Gastrocnemius medialis (tissue), 4 donors: ENCODE measurements at regions of chr10 and their contacts with region 1.

Region 1: DNA sequence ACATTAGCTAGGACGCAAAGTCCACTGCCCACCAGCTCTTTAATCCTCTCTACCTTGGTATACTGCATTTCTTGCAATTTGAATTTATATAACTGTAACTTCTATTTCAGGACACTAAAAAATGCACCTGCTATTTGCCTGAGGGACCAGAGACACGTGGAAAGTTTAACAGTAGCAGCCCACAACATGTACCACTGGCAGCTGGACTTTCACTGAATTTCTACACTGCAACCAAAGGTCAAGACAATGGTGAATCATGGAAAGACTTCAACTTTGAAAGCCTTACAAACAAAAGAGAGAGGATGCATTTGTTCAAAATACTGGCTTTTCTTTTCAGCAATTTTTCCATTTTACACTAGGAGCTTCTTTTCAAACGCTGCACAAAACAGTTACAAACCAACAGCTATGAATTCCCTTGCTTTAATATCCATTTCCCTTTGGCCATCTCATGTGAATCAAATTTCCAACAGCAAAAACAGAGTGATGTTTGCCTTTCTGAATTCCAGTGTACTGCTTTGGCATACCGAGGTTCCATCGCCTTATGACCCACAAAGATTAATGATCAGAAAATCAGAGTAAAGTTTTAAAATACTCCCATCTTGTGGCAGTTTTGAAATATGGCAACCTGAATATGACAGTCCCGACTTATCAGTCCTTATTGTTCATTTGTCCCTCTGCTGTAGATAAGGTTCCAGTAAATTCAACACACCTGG is 29.9 kb upstream of the HNRNPH3 start:
- DNase-seq: no peak
- ATAC-seq: peak; percentile 74 to 84
- H3K4me3 ChIP-seq: no peak overlapping the region
- H3K27ac ChIP-seq: no peak overlapping the region
- H3K4me1 ChIP-seq: peaks cover 0 to 5% of the 10 kb centered on the region in 2 donors
- H3K27me3 ChIP-seq: no peaks in the 10 kb centered on the region
- CTCF ChIP-seq: peak in 4 of 5 experiments; percentile 26 to 55 (median 45)
- POLR2A ChIP-seq: no peak

Region 2: GRCh38 chr10:67788025-67788886 is 513.7 kb before region 1 on chr10:
- in situ Hi-C with region 1: no loop called
- intact Hi-C with region 1: loop called (anchors 2 kb)
- DNase-seq: peak; percentile 29 to 76
- ATAC-seq: peak; percentile 67 to 94
- H3K4me3 ChIP-seq: peak overlapping the region in 1 of 4 donors; percentile 31
- H3K27ac ChIP-seq: peak overlapping the region in 1 of 4 donors; percentile 31
- H3K4me1 ChIP-seq: peaks cover 0 to 9% of the 10 kb centered on the region in 2 donors
- H3K27me3 ChIP-seq: no peaks in the 10 kb centered on the region
- CTCF ChIP-seq: peak; percentile 42 to 59 (median 52)
- POLR2A ChIP-seq: no peak

Region 3: GRCh38 chr10:67858971-67859370 is 443.0 kb before region 1 on chr10:
- in situ Hi-C with region 1: loop called in 3 of 4 experiments (anchors 25 kb)
- intact Hi-C with region 1: loop called (anchors 5 kb)
- DNase-seq: no peak
- ATAC-seq: no peak
- H3K4me3 ChIP-seq: no peak overlapping the region
- H3K27ac ChIP-seq: no peak overlapping the region
- H3K4me1 ChIP-seq: no peaks in the 10 kb centered on the region
- H3K27me3 ChIP-seq: no peaks in the 10 kb centered on the region
- CTCF ChIP-seq: no peak
- POLR2A ChIP-seq: no peak

Region 4: GRCh38 chr10:68212721-68213352 is 89.1 kb before region 1 on chr10:
- in situ Hi-C with region 1: no loop called
- intact Hi-C with region 1: loop called (anchors 5 kb)
- DNase-seq: no peak
- ATAC-seq: no peak
- H3K4me3 ChIP-seq: no peak overlapping the region
- H3K27ac ChIP-seq: no peak overlapping the region
- H3K4me1 ChIP-seq: no peaks in the 10 kb centered on the region
- H3K27me3 ChIP-seq: no peaks in the 10 kb centered on the region
- CTCF ChIP-seq: peak; percentile 25 to 42 (median 33)
- POLR2A ChIP-seq: no peak